Activated CD4-positive, alpha-beta T cell treated with anti-CD3 and anti-CD28 coated beads for 36 hours (primary cell): ENCODE measurements at regions of chr7 and their contacts with region 1.

Region 1: GRCh38 chr7:92833024-92833765 is 3.2 kb downstream of the CDK6 start:
- DNase-seq: peak; percentile 95
- ATAC-seq: peak; percentile 64
- H3K4me3 Mint-ChIP-seq: peak overlapping the region; percentile 96
- H3K27ac Mint-ChIP-seq: peak overlapping the region; percentile 95
- H3K4me1 Mint-ChIP-seq: peaks cover 35% of the 10 kb centered on the region
- H3K27me3 Mint-ChIP-seq: no peaks in the 10 kb centered on the region

Region 2: DNA sequence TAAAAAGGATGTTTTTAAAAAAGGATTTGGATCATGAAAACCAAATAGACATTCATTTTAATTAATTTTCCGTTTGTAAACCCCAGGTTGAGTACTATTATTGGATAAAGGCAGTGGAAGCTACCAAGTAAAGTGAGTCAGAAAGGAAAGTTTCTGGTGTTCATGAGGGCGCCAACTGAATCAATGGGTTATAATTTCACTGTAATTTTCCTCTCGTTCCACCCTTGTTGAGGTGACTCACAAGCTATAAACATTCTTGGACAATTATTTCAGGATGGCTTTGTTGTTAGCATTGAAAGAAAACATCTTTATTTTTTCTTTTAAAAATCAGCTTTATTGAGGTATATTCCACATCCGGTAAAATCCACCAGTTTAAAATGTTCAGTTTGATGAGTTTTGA is 237.9 kb before region 1 on chr7:
- CTCF ChIA-PET with region 1: interaction called, 3 read pairs
- POLR2A ChIA-PET with region 1: no interaction called
- intact Hi-C with region 1: loop called in 1 of 2 experiments (anchors 1 kb)
- DNase-seq: no peak
- ATAC-seq: no peak
- H3K4me3 Mint-ChIP-seq: no peak overlapping the region
- H3K27ac Mint-ChIP-seq: no peak overlapping the region
- H3K4me1 Mint-ChIP-seq: peaks cover 7% of the 10 kb centered on the region
- H3K27me3 Mint-ChIP-seq: peaks cover 3% of the 10 kb centered on the region

Region 3: DNA sequence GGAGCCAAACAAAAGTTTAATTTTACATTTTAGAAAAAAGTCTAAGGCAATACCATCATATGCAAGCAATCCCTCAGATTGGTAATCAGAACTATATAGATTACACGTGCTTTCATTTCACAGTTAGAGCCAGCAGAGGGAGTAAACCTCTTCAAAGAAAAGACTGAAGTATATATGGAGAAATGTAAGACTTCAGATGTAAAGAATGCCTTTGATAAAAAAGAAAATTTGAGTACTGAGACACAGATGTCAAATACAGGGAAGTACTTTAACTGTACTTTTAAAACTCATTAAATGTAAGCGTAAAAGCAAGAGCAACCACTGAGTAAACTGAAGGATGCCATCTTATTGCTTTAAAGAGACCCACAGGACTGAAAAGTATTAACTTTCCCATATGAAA is 141.6 kb before region 1 on chr7:
- CTCF ChIA-PET with region 1: interaction called, 9 read pairs
- POLR2A ChIA-PET with region 1: no interaction called
- intact Hi-C with region 1: loop called (anchors 1 to 2 kb)
- DNase-seq: no peak
- ATAC-seq: peak; percentile 88
- H3K4me3 Mint-ChIP-seq: no peak overlapping the region
- H3K27ac Mint-ChIP-seq: peak overlapping the region; percentile 73
- H3K4me1 Mint-ChIP-seq: peaks cover 47% of the 10 kb centered on the region
- H3K27me3 Mint-ChIP-seq: no peaks in the 10 kb centered on the region

Region 4: GRCh38 chr7:92768501-92769393 is 64.4 kb before region 1 on chr7:
- CTCF ChIA-PET with region 1: interaction called, 5 read pairs
- POLR2A ChIA-PET with region 1: interaction called, 4 read pairs
- intact Hi-C with region 1: loop called in 1 of 2 experiments (anchors 2 kb)
- DNase-seq: peak; percentile 61
- ATAC-seq: peak; percentile 95
- H3K4me3 Mint-ChIP-seq: peak overlapping the region; percentile 21
- H3K27ac Mint-ChIP-seq: peak overlapping the region; percentile 89
- H3K4me1 Mint-ChIP-seq: peaks cover 67% of the 10 kb centered on the region
- H3K27me3 Mint-ChIP-seq: no peaks in the 10 kb centered on the region

Region 5: DNA sequence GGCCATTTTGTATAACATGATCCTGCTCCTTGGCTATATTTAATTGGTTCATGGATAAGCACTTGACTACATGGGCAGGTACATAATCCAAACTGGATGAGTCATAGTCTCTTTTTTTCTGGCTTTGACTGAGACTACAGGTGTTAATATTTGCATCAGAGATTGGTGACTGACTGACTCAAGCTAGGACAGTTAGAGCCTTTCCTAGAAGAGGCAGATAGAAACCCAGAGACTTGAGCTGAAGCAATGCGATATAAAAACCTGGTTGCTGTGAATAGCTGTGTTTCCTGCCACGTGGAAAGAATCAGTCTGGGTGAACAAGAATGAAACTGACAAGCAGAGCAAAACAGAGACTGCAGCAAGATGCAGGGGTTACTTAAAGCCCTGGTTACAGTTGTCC is 203.6 kb after region 1 on chr7:
- CTCF ChIA-PET with region 1: interaction called, 4 read pairs
- POLR2A ChIA-PET with region 1: no interaction called
- intact Hi-C with region 1: loop called (anchors 1 to 2 kb)
- DNase-seq: peak; percentile 67
- ATAC-seq: peak; percentile 97
- H3K4me3 Mint-ChIP-seq: no peak overlapping the region
- H3K27ac Mint-ChIP-seq: peak overlapping the region; percentile 74
- H3K4me1 Mint-ChIP-seq: peaks cover 20% of the 10 kb centered on the region
- H3K27me3 Mint-ChIP-seq: no peaks in the 10 kb centered on the region

Region 6: DNA sequence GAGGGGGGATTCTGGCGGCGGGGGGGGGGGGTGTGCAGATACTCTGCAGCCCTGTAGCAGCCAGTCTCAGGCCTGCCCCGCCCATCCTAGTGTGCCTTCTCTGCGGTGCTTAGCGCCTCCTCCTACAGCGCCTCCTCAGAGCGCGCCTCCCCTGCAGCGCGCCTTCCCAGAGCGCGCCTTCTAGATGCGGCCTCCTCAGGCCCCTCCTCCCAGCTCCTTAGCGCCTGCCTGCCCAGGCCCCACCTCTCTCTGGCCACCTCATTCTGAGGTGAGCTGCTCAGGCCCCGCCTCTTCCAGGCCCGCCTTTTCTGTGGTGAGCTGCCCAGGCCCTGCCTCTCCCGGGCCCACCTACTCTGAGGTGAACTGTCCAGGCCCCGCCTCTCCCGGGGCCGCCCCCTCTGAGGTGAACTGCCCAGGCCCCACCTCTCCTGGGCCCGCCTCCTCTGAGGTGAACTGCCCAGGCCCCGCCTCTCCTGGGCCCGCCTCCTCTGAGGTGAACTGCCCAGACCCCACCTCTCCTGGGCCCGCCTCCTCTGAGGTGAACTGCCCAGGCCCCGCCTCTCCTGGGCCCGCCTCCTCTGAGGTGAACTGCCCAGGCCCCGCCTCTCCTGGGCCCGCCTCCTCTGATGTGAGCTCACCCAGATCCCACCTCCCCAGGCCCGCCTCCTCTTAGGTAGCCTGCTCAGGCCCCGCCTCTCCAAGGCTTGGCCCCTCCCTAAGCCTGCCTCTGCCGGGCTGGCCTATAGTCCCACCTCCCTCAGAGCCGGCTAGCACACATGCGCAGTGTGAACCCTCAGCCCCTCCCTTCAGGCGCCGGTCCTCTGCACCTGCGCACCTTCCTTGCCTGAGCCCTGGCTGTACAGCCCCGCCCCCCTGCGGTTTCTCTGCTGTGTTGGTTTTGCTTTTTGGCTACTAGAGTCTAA is 1824.8 kb after region 1 on chr7:
- CTCF ChIA-PET with region 1: no interaction called
- POLR2A ChIA-PET with region 1: no interaction called
- intact Hi-C with region 1: loop called in 1 of 2 experiments (anchors 10 kb)
- DNase-seq: peak; percentile 96
- ATAC-seq: peak; percentile 89
- H3K4me3 Mint-ChIP-seq: peak overlapping the region; percentile 67
- H3K27ac Mint-ChIP-seq: no peak overlapping the region
- H3K4me1 Mint-ChIP-seq: peaks cover 20% of the 10 kb centered on the region
- H3K27me3 Mint-ChIP-seq: peaks cover 20% of the 10 kb centered on the region